ENCODE measurements at regions of chr11 and their contacts with region 1.

Region 1: DNA sequence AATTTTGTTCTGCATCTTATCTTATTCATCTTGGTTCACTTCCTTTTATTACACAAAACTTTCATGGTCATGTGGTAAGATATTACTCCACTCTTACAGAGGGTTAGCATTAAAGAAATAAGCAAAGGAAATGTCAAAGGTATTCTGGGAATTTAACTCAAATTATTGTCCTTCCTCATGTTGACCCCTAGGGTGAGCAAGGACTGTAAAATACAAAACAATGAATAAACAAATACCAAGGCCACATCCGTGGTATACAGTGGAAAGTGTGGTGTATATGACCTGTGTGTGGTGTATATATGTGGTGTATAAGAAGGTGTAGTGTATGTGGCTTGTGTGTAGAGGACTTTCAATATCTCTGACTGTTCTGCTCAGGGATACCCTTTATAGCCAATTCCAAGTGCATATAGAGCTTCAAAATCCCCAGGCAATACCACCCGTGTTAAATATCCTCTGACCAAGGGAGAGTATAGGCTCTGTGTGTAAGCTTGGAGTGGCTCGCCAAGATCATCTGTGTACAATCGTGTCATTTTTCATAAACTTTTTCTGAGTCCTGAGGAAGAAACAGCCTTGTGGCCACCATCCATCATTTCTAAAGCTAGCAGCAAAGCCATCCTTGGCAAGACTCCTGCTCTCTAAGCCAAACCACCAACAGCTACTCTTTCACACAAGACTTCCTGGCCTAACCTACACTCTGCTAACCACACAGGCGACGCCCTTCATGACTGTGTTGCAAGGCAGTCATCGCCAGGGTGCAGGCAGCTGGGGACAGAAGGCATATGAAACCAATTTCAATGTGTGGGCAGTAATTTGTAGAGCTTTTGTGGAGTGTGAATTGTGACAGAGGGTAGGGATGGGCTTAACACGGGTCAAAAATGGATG is 548.0 kb downstream of the ETS1 start:
- DNase-seq: peak; percentile 79 to 90 (median 83)
- H3K4me3 ChIP-seq: peak overlapping the region; percentile 18 to 43
- H3K4me3 Mint-ChIP-seq: peak overlapping the region in 2 of 8 donors; percentile 81 to 86
- H3K27ac ChIP-seq: peak overlapping the region; percentile 45
- H3K27ac Mint-ChIP-seq: peak overlapping the region in 5 of 7 donors; percentile 90 to 96 (median 93)
- H3K4me1 ChIP-seq: peaks cover 90% of the 10 kb centered on the region
- H3K4me1 Mint-ChIP-seq: peaks cover 32 to 47% (median 41%) of the 10 kb centered on the region in 4 donors
- H3K27me3 ChIP-seq: no peaks in the 10 kb centered on the region
- H3K27me3 Mint-ChIP-seq: no peaks in the 10 kb centered on the region

Region 2: GRCh38 chr11:127962416-127962815 is 77.0 kb before region 1 on chr11:
- CTCF ChIA-PET with region 1: no interaction called
- POLR2A ChIA-PET with region 1: no interaction called
- intact Hi-C with region 1: no loop called
- DNase-seq: no peak
- H3K4me3 ChIP-seq: no peak overlapping the region
- H3K4me3 Mint-ChIP-seq: no peak overlapping the region
- H3K27ac ChIP-seq: no peak overlapping the region
- H3K27ac Mint-ChIP-seq: no peak overlapping the region
- H3K4me1 ChIP-seq: no peaks in the 10 kb centered on the region
- H3K4me1 Mint-ChIP-seq: no peaks in the 10 kb centered on the region
- H3K27me3 ChIP-seq: no peaks in the 10 kb centered on the region
- H3K27me3 Mint-ChIP-seq: peaks cover 15 to 16% of the 10 kb centered on the region in 2 donors

Region 3: GRCh38 chr11:128052912-128053641 is 13.7 kb after region 1 on chr11:
- CTCF ChIA-PET with region 1: interaction called, 72 read pairs
- POLR2A ChIA-PET with region 1: interaction called, 208 read pairs
- intact Hi-C with region 1: loop called (anchors 1 kb)
- DNase-seq: peak in 4 of 5 donors; percentile 37 to 48 (median 46)
- H3K4me3 ChIP-seq: peak overlapping the region in 1 of 2 donors; percentile 44
- H3K4me3 Mint-ChIP-seq: peak overlapping the region; percentile 53 to 83 (median 78)
- H3K27ac ChIP-seq: peak overlapping the region; percentile 52
- H3K27ac Mint-ChIP-seq: peak overlapping the region; percentile 71 to 95 (median 85)
- H3K4me1 ChIP-seq: peaks cover 69% of the 10 kb centered on the region
- H3K4me1 Mint-ChIP-seq: peaks cover 49 to 78% (median 65%) of the 10 kb centered on the region in 4 donors
- H3K27me3 ChIP-seq: no peaks in the 10 kb centered on the region
- H3K27me3 Mint-ChIP-seq: no peaks in the 10 kb centered on the region

Region 4: DNA sequence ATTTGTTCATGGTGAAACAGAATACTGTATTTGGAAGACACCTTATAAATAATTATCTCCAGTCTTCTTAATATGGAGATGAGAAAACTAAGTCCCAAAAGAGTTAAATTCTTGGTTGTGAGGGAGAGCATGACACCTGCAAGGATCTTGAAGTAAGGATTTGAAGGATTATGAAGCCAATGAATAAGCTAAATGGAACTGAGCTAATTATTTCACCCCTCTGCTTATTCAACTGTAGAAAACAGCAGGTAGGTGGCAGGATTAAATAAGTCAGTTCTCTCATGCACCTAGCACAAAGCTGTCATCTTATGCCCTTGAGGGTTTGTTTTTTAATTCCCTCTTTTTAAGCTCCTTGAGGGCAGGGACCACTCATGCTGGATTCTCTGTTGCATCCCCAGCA is 90.7 kb after region 1 on chr11:
- CTCF ChIA-PET with region 1: interaction called, 11 read pairs
- POLR2A ChIA-PET with region 1: interaction called, 5 read pairs
- intact Hi-C with region 1: no loop called
- DNase-seq: no peak
- H3K4me3 ChIP-seq: no peak overlapping the region
- H3K4me3 Mint-ChIP-seq: no peak overlapping the region
- H3K27ac ChIP-seq: no peak overlapping the region
- H3K27ac Mint-ChIP-seq: peak overlapping the region in 1 of 7 donors; percentile 19
- H3K4me1 ChIP-seq: no peaks in the 10 kb centered on the region
- H3K4me1 Mint-ChIP-seq: peaks cover 0 to 13% (median 4%) of the 10 kb centered on the region in 4 donors
- H3K27me3 ChIP-seq: no peaks in the 10 kb centered on the region
- H3K27me3 Mint-ChIP-seq: no peaks in the 10 kb centered on the region

Region 5: GRCh38 chr11:128506999-128507611 is 467.7 kb after region 1 on chr11:
- CTCF ChIA-PET with region 1: no interaction called
- POLR2A ChIA-PET with region 1: interaction called, 4 read pairs
- intact Hi-C with region 1: loop called (anchors 10 kb)
- DNase-seq: peak in 1 of 5 donors; percentile 77
- H3K4me3 ChIP-seq: peak overlapping the region; percentile 37 to 39
- H3K4me3 Mint-ChIP-seq: peak overlapping the region; percentile 81 to 100 (median 94)
- H3K27ac ChIP-seq: peak overlapping the region; percentile 89
- H3K27ac Mint-ChIP-seq: peak overlapping the region; percentile 92 to 99 (median 98)
- H3K4me1 ChIP-seq: peaks cover 100% of the 10 kb centered on the region
- H3K4me1 Mint-ChIP-seq: peaks cover 80 to 100% (median 89%) of the 10 kb centered on the region in 4 donors
- H3K27me3 ChIP-seq: no peaks in the 10 kb centered on the region
- H3K27me3 Mint-ChIP-seq: no peaks in the 10 kb centered on the region

Region 6: GRCh38 chr11:128848815-128849455 is 809.6 kb after region 1 on chr11:
- CTCF ChIA-PET with region 1: interaction called, 3 read pairs
- POLR2A ChIA-PET with region 1: interaction called, 5 read pairs
- intact Hi-C with region 1: loop called (anchors 5 kb)
- DNase-seq: peak in 4 of 5 donors; percentile 46 to 62 (median 56)
- H3K4me3 ChIP-seq: no peak overlapping the region
- H3K4me3 Mint-ChIP-seq: peak overlapping the region in 1 of 8 donors; percentile 27
- H3K27ac ChIP-seq: no peak overlapping the region
- H3K27ac Mint-ChIP-seq: peak overlapping the region in 5 of 7 donors; percentile 3 to 78 (median 46)
- H3K4me1 ChIP-seq: peaks cover 35% of the 10 kb centered on the region
- H3K4me1 Mint-ChIP-seq: peaks cover 23 to 42% (median 37%) of the 10 kb centered on the region in 4 donors
- H3K27me3 ChIP-seq: no peaks in the 10 kb centered on the region
- H3K27me3 Mint-ChIP-seq: no peaks in the 10 kb centered on the region

Measured in CD4-positive, alpha-beta memory T cell (primary cell).